Ascending aorta (tissue), 2 donors: ENCODE measurements at regions of chr1 and their contacts with region 1.

Region 1: GRCh38 chr1:12464598-12465056 is 153.4 kb downstream of the DHRS3 start:
- DNase-seq: peak in 1 of 2 donors; percentile 88
- H3K4me3 ChIP-seq: peak overlapping the region in 1 of 2 donors; percentile 23
- H3K27ac ChIP-seq: peak overlapping the region; percentile 72 to 86
- H3K4me1 ChIP-seq: peaks cover 38 to 50% of the 10 kb centered on the region in 2 donors
- H3K27me3 ChIP-seq: no peaks in the 10 kb centered on the region
- CTCF ChIP-seq: no peak

Region 2: DNA sequence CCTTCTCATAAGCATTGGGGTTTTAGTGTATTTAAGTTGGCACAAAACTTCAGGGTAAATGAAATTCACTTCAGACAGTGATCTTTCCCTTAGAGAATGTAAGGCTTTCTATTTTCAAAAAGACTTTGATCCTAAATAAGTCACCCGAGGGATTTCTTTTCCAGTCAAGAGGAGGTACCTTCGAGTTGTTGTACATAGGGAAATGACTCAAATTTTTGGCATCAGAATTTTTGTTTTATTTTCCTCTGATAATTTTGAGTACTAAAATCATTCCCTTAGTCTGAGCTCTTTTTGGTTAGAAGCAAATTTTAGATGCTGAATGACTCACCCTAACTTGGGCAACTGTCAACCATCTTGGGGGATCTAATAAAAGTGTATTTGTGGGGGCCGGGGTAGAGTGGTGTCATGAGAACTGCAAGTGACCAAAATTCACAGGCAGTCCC is 40.5 kb before region 1 on chr1:
- intact Hi-C with region 1: loop called (anchors 5 kb)
- DNase-seq: peak in 1 of 2 donors; percentile 72
- H3K4me3 ChIP-seq: no peak overlapping the region
- H3K27ac ChIP-seq: peak overlapping the region; percentile 78
- H3K4me1 ChIP-seq: peaks cover 6 to 34% of the 10 kb centered on the region in 2 donors
- H3K27me3 ChIP-seq: no peaks in the 10 kb centered on the region
- CTCF ChIP-seq: no peak

Region 3: DNA sequence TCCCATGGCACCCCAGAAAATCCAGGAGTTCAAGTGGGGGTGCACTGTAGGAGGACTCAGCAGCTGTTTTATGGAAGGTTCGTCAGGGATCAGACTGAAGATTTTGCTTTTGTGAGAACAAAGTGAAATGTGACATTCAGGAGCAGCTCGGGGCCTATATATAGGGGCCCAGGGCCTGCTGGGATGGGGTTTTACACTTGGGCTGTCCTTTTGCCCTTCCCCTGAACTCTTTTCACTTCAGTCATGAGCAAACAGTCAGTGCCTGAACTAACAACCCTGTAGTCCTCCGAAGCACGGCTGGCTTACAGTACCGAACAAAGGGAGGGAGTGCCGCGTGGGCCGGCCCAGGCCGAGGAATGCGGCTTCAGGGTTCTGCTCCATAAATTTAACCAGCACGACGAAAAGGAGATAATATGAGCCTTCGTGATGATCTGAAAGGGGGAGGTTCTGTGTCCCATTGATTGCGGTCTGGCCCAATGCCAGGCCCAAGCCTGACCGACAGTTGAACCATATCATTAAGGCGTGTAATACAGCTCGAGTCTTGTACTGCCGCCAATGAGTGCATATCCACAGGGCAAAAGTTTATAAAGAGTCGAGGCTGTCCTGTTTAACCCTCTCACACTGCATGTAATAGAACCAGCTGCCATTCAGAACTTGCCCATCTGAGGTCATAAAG is 13.4 kb after region 1 on chr1:
- intact Hi-C with region 1: loop called (anchors 2 kb)
- DNase-seq: peak; percentile 42 to 83
- H3K4me3 ChIP-seq: no peak overlapping the region
- H3K27ac ChIP-seq: peak overlapping the region; percentile 74 to 88
- H3K4me1 ChIP-seq: peaks cover 39 to 69% of the 10 kb centered on the region in 2 donors
- H3K27me3 ChIP-seq: no peaks in the 10 kb centered on the region
- CTCF ChIP-seq: no peak